ENCODE measurements at regions of chr2 and their contacts with region 1.

Region 1: GRCh38 chr2:151409601-151410484 is at the start of gene RIF1:
- DNase-seq: peak; percentile 83
- ATAC-seq: peak; percentile 88
- H3K4me3 ChIP-seq: peak within 1 kb of the TSS; percentile 70 to 96 (median 95)
- H3K4me3 Mint-ChIP-seq: peak within 1 kb of the TSS; percentile 90
- H3K27ac ChIP-seq: peak within 1 kb of the TSS; percentile 78 to 93
- H3K27ac Mint-ChIP-seq: peak within 1 kb of the TSS; percentile 82
- H3K4me1 ChIP-seq: peaks cover 6 to 14% of the 10 kb centered on the region in 2 donors
- H3K4me1 Mint-ChIP-seq: peaks cover 19% of the 10 kb centered on the region
- H3K27me3 ChIP-seq: no peaks in the 10 kb centered on the region
- H3K27me3 Mint-ChIP-seq: no peaks in the 10 kb centered on the region
- CTCF ChIP-seq: peak; percentile 80
- total RNA-seq, gene RIF1: 60.5 and 65.5 TPM in 2 replicates

Region 2: DNA sequence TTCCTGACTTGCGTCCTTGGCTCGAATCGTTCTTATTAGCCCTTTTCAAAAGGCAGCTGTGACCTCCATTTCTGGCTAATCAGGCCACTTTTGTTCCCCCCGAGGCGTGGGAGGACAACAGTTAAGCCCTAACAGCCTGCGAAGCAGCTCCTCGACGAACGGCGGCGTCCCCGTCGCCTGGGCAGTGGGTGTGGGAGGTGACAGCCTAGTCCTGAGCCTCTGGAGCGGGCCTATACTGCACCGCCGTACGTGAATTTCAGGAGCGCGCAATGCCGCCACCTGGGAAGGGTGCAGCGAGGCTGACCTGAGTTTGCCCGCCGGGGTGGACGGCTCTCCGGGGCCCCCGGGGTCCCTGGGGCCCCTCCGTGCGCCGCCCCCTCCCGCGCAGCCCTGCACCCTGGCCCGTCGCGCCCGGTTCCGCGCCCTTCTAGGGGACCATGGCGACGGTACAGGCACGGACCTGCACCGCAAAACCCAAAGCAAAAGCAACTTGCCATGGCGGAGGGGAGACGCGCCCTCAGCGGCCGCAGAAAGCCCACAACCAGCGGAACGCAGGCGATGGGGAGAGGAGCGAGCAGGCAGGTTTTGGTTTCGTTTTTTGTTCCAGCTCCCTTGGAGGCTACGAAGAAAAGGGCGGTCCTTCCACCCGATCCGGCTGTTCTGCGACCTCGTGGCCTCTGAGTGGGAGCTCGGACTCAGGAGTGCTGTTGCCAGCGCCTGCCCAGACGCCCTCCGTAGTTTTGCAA is 148.4 kb before region 1 on chr2 and contains the start of gene RBM43:
- CTCF ChIA-PET with region 1: interaction called, 7 read pairs
- POLR2A ChIA-PET with region 1: no interaction called
- intact Hi-C with region 1: loop called (anchors 1 kb)
- DNase-seq: peak; percentile 86
- ATAC-seq: peak; percentile 84
- H3K4me3 ChIP-seq: peak within 1 kb of the TSS; percentile 78 to 96 (median 85)
- H3K4me3 Mint-ChIP-seq: peak within 1 kb of the TSS; percentile 94
- H3K27ac ChIP-seq: peak within 1 kb of the TSS; percentile 88 to 91
- H3K27ac Mint-ChIP-seq: peak within 1 kb of the TSS; percentile 87
- H3K4me1 ChIP-seq: peaks cover 11 to 12% of the 10 kb centered on the region in 2 donors
- H3K4me1 Mint-ChIP-seq: peaks cover 23% of the 10 kb centered on the region
- H3K27me3 ChIP-seq: no peaks in the 10 kb centered on the region
- H3K27me3 Mint-ChIP-seq: no peaks in the 10 kb centered on the region
- CTCF ChIP-seq: no peak
- total RNA-seq, gene RBM43: 8.4 and 9.0 TPM in 2 replicates

Region 3: GRCh38 chr2:151289369-151290088 is 120.3 kb before region 1 on chr2 and contains the start of gene NMI:
- CTCF ChIA-PET with region 1: interaction called, 5 read pairs
- POLR2A ChIA-PET with region 1: no interaction called
- intact Hi-C with region 1: loop called (anchors 1 kb)
- DNase-seq: peak; percentile 85
- ATAC-seq: peak; percentile 76
- H3K4me3 ChIP-seq: peak within 1 kb of the TSS; percentile 75 to 97 (median 92)
- H3K4me3 Mint-ChIP-seq: peak within 1 kb of the TSS; percentile 94
- H3K27ac ChIP-seq: peak within 1 kb of the TSS; percentile 95 to 97
- H3K27ac Mint-ChIP-seq: peak within 1 kb of the TSS; percentile 97
- H3K4me1 ChIP-seq: peaks cover 27 to 31% of the 10 kb centered on the region in 2 donors
- H3K4me1 Mint-ChIP-seq: peaks cover 39% of the 10 kb centered on the region
- H3K27me3 ChIP-seq: no peaks in the 10 kb centered on the region
- H3K27me3 Mint-ChIP-seq: no peaks in the 10 kb centered on the region
- CTCF ChIP-seq: no peak
- total RNA-seq, gene NMI: 28.5 and 34.0 TPM in 2 replicates

Region 4: GRCh38 chr2:151498178-151498577 is 88.3 kb after region 1 on chr2:
- CTCF ChIA-PET with region 1: no interaction called
- POLR2A ChIA-PET with region 1: no interaction called
- intact Hi-C with region 1: no loop called
- DNase-seq: no peak
- ATAC-seq: no peak
- H3K4me3 ChIP-seq: no peak overlapping the region
- H3K4me3 Mint-ChIP-seq: no peak overlapping the region
- H3K27ac ChIP-seq: no peak overlapping the region
- H3K27ac Mint-ChIP-seq: no peak overlapping the region
- H3K4me1 ChIP-seq: no peaks in the 10 kb centered on the region
- H3K4me1 Mint-ChIP-seq: no peaks in the 10 kb centered on the region
- H3K27me3 ChIP-seq: no peaks in the 10 kb centered on the region
- H3K27me3 Mint-ChIP-seq: no peaks in the 10 kb centered on the region
- CTCF ChIP-seq: no peak